ENCODE measurements at regions of chr5 and their contacts with region 1.

Region 1: DNA sequence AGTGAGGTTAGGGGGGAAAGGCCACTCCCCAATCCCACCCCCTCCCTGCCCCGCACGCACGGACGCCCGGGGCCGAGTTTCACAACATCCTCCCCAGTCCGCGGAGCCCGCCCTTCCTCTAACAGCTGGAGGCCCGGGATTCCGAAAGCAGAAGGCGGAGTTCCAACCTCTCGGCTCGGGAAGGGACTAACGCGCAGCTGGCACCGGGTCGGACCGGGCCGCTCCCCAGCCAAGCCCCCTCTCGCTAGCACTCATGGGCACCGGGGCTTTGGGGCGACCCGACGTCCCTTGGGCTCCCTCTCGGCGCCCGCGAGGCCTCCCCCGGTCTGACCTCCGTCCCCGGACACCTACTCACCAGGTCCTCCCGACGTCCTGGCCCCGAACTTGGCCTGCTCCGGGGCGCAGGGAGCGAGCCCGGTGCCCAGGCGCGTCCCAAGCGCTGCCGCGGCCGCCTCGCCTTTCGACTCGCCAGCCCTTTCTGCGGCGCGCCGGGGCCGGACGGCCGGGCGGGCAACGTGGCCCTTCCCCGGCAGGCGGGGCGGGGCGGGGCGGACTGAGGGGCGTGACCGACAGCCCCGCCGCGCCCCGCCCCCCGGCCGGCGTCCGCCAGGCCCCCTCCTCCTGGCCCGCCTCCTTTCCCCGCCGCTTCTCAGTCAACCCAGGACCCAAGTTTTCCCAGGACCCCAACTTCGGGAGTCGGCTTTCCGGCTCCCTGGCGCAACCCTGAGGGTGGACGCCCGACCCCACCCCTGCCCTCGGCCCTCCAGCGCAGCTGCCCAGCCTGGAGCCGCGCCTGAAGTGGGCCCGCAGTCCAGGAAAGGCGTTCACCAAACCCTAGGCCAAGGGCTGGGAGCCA is at the start of gene MGAT1:
- DNase-seq: peak; percentile 66
- H3K4me3 ChIP-seq: peak within 1 kb of the TSS; percentile 77 to 96 (median 92)
- H3K27ac ChIP-seq: peak within 1 kb of the TSS; percentile 63
- H3K4me1 ChIP-seq: peaks cover 74% of the 10 kb centered on the region
- H3K27me3 ChIP-seq: no peaks in the 10 kb centered on the region
- CTCF ChIP-seq: no peak
- total RNA-seq, gene MGAT1: 91.4 to 177 TPM

Region 2: GRCh38 chr5:180670586-180671359 is 131.8 kb before region 1 on chr5:
- CTCF ChIA-PET with region 1: no interaction called
- dilution Hi-C with region 1: no loop called
- in situ Hi-C with region 1: no loop called
- intact Hi-C with region 1: no loop called
- DNase-seq: peak; percentile 13
- H3K4me3 ChIP-seq: no peak overlapping the region
- H3K27ac ChIP-seq: no peak overlapping the region
- H3K4me1 ChIP-seq: no peaks in the 10 kb centered on the region
- H3K27me3 ChIP-seq: peaks cover 9% of the 10 kb centered on the region
- CTCF ChIP-seq: peak; percentile 62 to 74

Region 3: GRCh38 chr5:180784497-180785097 is 18.0 kb before region 1 on chr5:
- CTCF ChIA-PET with region 1: interaction called, 7 read pairs
- dilution Hi-C with region 1: no loop called
- in situ Hi-C with region 1: no loop called
- intact Hi-C with region 1: loop called (anchors 1 kb)
- DNase-seq: peak; percentile 57
- H3K4me3 ChIP-seq: no peak overlapping the region
- H3K27ac ChIP-seq: no peak overlapping the region
- H3K4me1 ChIP-seq: peaks cover 21% of the 10 kb centered on the region
- H3K27me3 ChIP-seq: no peaks in the 10 kb centered on the region
- CTCF ChIP-seq: peak; percentile 86 to 91

Region 4: GRCh38 chr5:180839925-180840324 is 37.4 kb after region 1 on chr5:
- CTCF ChIA-PET with region 1: no interaction called
- dilution Hi-C with region 1: loop called (anchors 5 kb)
- in situ Hi-C with region 1: no loop called
- intact Hi-C with region 1: no loop called
- DNase-seq: no peak
- H3K4me3 ChIP-seq: no peak overlapping the region
- H3K27ac ChIP-seq: no peak overlapping the region
- H3K4me1 ChIP-seq: no peaks in the 10 kb centered on the region
- H3K27me3 ChIP-seq: no peaks in the 10 kb centered on the region
- CTCF ChIP-seq: no peak

Region 5: GRCh38 chr5:180868960-180869359 is 66.4 kb after region 1 on chr5:
- CTCF ChIA-PET with region 1: no interaction called
- dilution Hi-C with region 1: loop called (anchors 5 kb)
- in situ Hi-C with region 1: loop called in 1 of 2 experiments (anchors 5 kb)
- intact Hi-C with region 1: no loop called
- DNase-seq: peak; percentile 68
- H3K4me3 ChIP-seq: no peak overlapping the region
- H3K27ac ChIP-seq: no peak overlapping the region
- H3K4me1 ChIP-seq: no peaks in the 10 kb centered on the region
- H3K27me3 ChIP-seq: no peaks in the 10 kb centered on the region
- CTCF ChIP-seq: peak; percentile 78 to 93

Region 6: DNA sequence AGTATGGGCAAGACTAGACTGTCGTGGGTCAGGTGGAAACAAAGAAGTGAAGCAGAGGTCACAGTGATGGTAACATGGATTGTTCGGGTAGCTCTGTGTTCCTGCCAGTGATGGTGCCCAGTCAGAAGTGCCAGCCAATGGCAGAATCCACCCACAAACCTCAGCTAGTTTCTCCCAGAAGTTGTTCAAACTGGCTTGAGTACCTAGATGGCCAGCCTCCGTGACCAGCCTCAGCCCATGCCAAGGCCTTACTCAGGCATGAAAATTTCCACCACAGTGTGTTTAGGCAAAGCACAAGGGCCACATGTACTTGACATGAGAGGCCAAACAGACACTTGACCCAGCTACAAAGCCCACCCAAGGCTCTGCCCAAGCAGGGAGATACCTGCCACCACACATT is 218.1 kb after region 1 on chr5:
- CTCF ChIA-PET with region 1: no interaction called
- dilution Hi-C with region 1: no loop called
- in situ Hi-C with region 1: no loop called
- intact Hi-C with region 1: no loop called
- DNase-seq: no peak
- H3K4me3 ChIP-seq: no peak overlapping the region
- H3K27ac ChIP-seq: no peak overlapping the region
- H3K4me1 ChIP-seq: no peaks in the 10 kb centered on the region
- H3K27me3 ChIP-seq: no peaks in the 10 kb centered on the region
- CTCF ChIP-seq: no peak

Region 7: GRCh38 chr5:181198963-181199519 is 396.5 kb after region 1 on chr5:
- CTCF ChIA-PET with region 1: no interaction called
- dilution Hi-C with region 1: loop called (anchors 5 kb)
- in situ Hi-C with region 1: no loop called
- intact Hi-C with region 1: no loop called
- DNase-seq: no peak
- H3K4me3 ChIP-seq: no peak overlapping the region
- H3K27ac ChIP-seq: no peak overlapping the region
- H3K4me1 ChIP-seq: peaks cover 8% of the 10 kb centered on the region
- H3K27me3 ChIP-seq: no peaks in the 10 kb centered on the region
- CTCF ChIP-seq: no peak

Measured in mammary epithelial cell (primary cell).